Astrocyte of the cerebellum (primary cell): ENCODE measurements at regions of chr22 and their contacts with region 1.

Region 1: GRCh38 chr22:24059121-24059520 is 48.0 kb downstream of the CABIN1 start:
- DNase-seq: peak; percentile 94
- H3K4me3 ChIP-seq: no peak overlapping the region
- CTCF ChIP-seq: no peak

Region 2: DNA sequence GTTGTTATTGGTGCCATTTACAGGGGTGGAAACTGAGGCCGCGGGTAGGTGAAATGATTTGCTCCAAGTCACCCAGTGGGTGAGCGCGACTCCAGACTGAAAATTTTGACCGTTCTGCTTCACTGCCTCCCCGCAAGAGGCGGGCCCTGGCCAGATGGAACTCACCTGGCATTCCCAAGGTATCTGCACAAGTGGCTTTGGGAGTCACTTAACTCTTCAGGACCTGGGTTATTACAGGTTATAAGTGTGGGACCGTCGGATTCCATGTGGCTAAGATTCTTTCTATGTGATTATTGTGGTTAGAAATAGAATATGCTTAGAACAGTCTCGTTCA is 47.4 kb before region 1 on chr22:
- in situ Hi-C with region 1: no loop called
- DNase-seq: no peak
- H3K4me3 ChIP-seq: peak overlapping the region; percentile 96
- CTCF ChIP-seq: no peak

Region 3: DNA sequence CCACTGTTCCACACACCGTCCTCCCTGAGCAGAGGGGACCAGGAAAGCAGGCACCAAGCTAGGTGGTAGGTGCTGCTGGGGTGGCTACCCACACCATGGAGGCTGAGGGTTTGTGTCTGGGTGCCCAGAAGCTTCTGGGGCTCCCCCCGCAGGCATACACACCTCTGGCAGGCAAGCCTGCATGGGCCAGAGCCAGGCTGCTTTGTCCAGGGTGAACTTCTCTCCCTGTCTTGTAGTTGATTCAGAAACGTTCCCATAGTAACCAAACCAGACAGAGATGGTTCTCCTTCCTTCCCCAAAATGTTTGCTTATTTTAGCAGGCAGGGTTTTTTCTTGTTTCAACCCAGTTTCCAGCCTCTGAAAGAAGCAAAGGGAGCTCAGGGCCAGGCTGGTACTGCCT is 81.2 kb after region 1 on chr22:
- in situ Hi-C with region 1: loop called (anchors 5 kb)
- DNase-seq: no peak
- H3K4me3 ChIP-seq: no peak overlapping the region
- CTCF ChIP-seq: no peak